ENCODE measurements at regions of chr17 and their contacts with region 1.

Region 1: GRCh38 chr17:15278924-15279477 is 13.9 kb upstream of the PMP22 start:
- DNase-seq: peak; percentile 90
- H3K4me3 ChIP-seq: no peak overlapping the region
- H3K27ac ChIP-seq: peak overlapping the region; percentile 29
- H3K4me1 ChIP-seq: peaks cover 9% of the 10 kb centered on the region
- H3K27me3 ChIP-seq: no peaks in the 10 kb centered on the region
- CTCF ChIP-seq: no peak

Region 2: GRCh38 chr17:15262291-15263205 is 16.5 kb before region 1 on chr17:
- CTCF ChIA-PET with region 1: interaction called, 3 read pairs
- dilution Hi-C with region 1: no loop called
- in situ Hi-C with region 1: no loop called
- intact Hi-C with region 1: loop called (anchors 2 kb)
- DNase-seq: peak; percentile 72
- H3K4me3 ChIP-seq: peak overlapping the region; percentile 68 to 79 (median 77)
- H3K27ac ChIP-seq: peak overlapping the region; percentile 11
- H3K4me1 ChIP-seq: peaks cover 32% of the 10 kb centered on the region
- H3K27me3 ChIP-seq: no peaks in the 10 kb centered on the region
- CTCF ChIP-seq: peak in 1 of 2 donors; percentile 2

Measured in mammary epithelial cell (primary cell).